Caco-2 (cell line): ENCODE measurements at regions of chr14 and their contacts with region 1.

Region 1: DNA sequence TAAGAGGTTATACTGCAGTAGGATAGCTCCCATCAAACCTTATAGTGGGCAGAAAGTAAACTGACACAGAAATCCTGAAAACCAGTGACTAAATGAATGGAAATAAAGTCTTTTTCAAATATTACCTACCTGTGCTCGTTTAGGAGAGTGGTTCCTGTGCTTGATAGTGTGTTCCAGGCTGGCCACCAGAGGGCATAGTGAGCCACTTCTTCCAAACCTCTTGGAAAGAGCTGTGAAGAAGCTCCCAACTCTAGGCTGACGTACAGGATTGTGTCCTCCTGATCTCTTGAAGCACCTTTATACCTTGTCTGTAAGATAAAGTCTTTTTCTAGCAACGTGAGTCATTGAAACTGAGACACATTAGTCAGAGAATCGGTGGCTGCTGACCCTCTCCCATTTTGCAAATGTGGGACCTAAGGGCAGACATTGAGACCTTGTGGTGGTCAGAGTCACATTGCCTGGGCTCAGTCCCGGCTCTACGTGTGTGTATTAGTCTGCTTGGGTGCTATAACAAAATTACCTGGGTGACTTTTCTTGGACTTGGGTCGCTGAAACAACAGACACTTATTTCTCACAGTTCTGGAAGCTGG is 17.6 kb downstream of the TDP1 start:
- DNase-seq: peak; percentile 62 to 69
- H3K4me3 ChIP-seq: no peak overlapping the region
- H3K4me3 Mint-ChIP-seq: no peak overlapping the region
- H3K27ac Mint-ChIP-seq: no peak overlapping the region
- H3K4me1 ChIP-seq: no peaks in the 10 kb centered on the region
- H3K4me1 Mint-ChIP-seq: no peaks in the 10 kb centered on the region
- H3K27me3 ChIP-seq: no peaks in the 10 kb centered on the region
- H3K27me3 Mint-ChIP-seq: no peaks in the 10 kb centered on the region
- CTCF ChIP-seq: peak; percentile 77 to 94

Region 2: DNA sequence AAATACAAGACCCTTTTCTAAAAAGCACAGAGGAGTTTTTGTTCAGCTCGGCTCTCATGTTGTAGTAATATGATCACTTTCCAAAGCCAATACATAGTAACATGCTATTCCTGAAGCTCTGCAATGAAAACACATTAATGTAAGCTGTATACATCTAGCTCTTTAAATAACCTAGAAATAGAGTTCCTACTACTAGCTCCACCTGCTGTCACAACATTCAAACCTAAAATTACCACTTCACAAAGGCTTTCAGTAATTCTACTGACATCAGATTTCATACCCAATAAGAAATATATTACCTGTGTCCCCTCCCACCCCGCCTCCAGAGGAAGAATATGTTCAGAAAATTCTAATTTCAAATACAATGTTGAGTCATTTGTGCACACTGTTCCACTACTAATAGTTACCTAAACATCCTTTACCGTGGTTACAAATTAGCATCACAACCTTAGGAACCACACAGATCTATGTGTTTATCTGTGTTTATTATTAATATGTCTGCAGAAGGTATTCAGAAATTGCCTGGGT is 36.6 kb before region 1 on chr14:
- CTCF ChIA-PET with region 1: interaction called, 11 read pairs
- POLR2A ChIA-PET with region 1: no interaction called
- intact Hi-C with region 1: no loop called
- DNase-seq: no peak
- H3K4me3 ChIP-seq: no peak overlapping the region
- H3K4me3 Mint-ChIP-seq: no peak overlapping the region
- H3K27ac Mint-ChIP-seq: no peak overlapping the region
- H3K4me1 ChIP-seq: no peaks in the 10 kb centered on the region
- H3K4me1 Mint-ChIP-seq: no peaks in the 10 kb centered on the region
- H3K27me3 ChIP-seq: no peaks in the 10 kb centered on the region
- H3K27me3 Mint-ChIP-seq: no peaks in the 10 kb centered on the region
- CTCF ChIP-seq: no peak

Region 3: GRCh38 chr14:89954070-89955028 is 19.0 kb before region 1 on chr14 and contains the start of gene EFCAB11:
- CTCF ChIA-PET with region 1: interaction called, 21 read pairs
- POLR2A ChIA-PET with region 1: interaction called, 3 read pairs
- intact Hi-C with region 1: no loop called
- DNase-seq: peak; percentile 97 to 98
- H3K4me3 ChIP-seq: peak within 1 kb of the TSS; percentile 92
- H3K4me3 Mint-ChIP-seq: peak within 1 kb of the TSS; percentile 93
- H3K27ac Mint-ChIP-seq: peak within 1 kb of the TSS; percentile 97
- H3K4me1 ChIP-seq: no peaks in the 10 kb centered on the region
- H3K4me1 Mint-ChIP-seq: peaks cover 15% of the 10 kb centered on the region
- H3K27me3 ChIP-seq: no peaks in the 10 kb centered on the region
- H3K27me3 Mint-ChIP-seq: no peaks in the 10 kb centered on the region
- CTCF ChIP-seq: peak in 1 of 2 experiments; percentile 25
- total RNA-seq, gene EFCAB11: 33.1 and 36.2 TPM in 2 replicates

Region 4: GRCh38 chr14:90060312-90060964 is 87.1 kb after region 1 on chr14:
- CTCF ChIA-PET with region 1: interaction called, 11 read pairs
- POLR2A ChIA-PET with region 1: no interaction called
- intact Hi-C with region 1: loop called (anchors 1 kb)
- DNase-seq: peak; percentile 52 to 66
- H3K4me3 ChIP-seq: peak overlapping the region; percentile 32
- H3K4me3 Mint-ChIP-seq: peak overlapping the region; percentile 85
- H3K27ac Mint-ChIP-seq: no peak overlapping the region
- H3K4me1 ChIP-seq: peaks cover 8% of the 10 kb centered on the region; the same call in 1 of the 2 replicates
- H3K4me1 Mint-ChIP-seq: peaks cover 10% of the 10 kb centered on the region
- H3K27me3 ChIP-seq: peaks cover 5% of the 10 kb centered on the region
- H3K27me3 Mint-ChIP-seq: peaks cover 32% of the 10 kb centered on the region
- CTCF ChIP-seq: peak; percentile 44 to 46

Region 5: DNA sequence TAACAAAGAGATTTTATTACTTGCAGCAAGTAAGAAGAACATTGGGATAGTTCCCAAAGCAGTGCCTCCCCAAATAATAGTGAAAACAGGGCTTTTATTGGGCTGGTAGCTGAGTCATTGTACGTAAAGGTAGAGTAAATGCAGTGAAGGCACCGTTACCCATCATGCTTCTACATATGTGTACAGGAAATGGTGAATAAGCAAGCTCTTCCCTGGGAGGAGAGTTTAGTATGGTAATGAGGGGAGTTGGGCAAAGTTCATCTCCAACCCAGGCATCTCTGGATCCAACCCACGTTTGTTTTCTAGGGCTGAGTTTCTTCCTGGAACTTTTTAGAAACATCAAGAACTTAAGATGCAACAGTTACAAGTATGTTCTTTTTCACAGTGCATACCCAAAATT is 144.7 kb after region 1 on chr14:
- CTCF ChIA-PET with region 1: no interaction called
- POLR2A ChIA-PET with region 1: no interaction called
- intact Hi-C with region 1: no loop called
- DNase-seq: no peak
- H3K4me3 ChIP-seq: no peak overlapping the region
- H3K4me3 Mint-ChIP-seq: no peak overlapping the region
- H3K27ac Mint-ChIP-seq: no peak overlapping the region
- H3K4me1 ChIP-seq: no peaks in the 10 kb centered on the region
- H3K4me1 Mint-ChIP-seq: no peaks in the 10 kb centered on the region
- H3K27me3 ChIP-seq: no peaks in the 10 kb centered on the region
- H3K27me3 Mint-ChIP-seq: peaks cover 2% of the 10 kb centered on the region
- CTCF ChIP-seq: no peak

Region 6: GRCh38 chr14:90184571-90185266 is 211.4 kb after region 1 on chr14:
- CTCF ChIA-PET with region 1: interaction called, 10 read pairs
- POLR2A ChIA-PET with region 1: no interaction called
- intact Hi-C with region 1: no loop called
- DNase-seq: peak in 1 of 2 experiments; percentile 20
- H3K4me3 ChIP-seq: no peak overlapping the region
- H3K4me3 Mint-ChIP-seq: no peak overlapping the region
- H3K27ac Mint-ChIP-seq: no peak overlapping the region
- H3K4me1 ChIP-seq: no peaks in the 10 kb centered on the region
- H3K4me1 Mint-ChIP-seq: no peaks in the 10 kb centered on the region
- H3K27me3 ChIP-seq: no peaks in the 10 kb centered on the region
- H3K27me3 Mint-ChIP-seq: peaks cover 18% of the 10 kb centered on the region
- CTCF ChIP-seq: no peak

Region 7: GRCh38 chr14:90235179-90235976 is 262.0 kb after region 1 on chr14:
- CTCF ChIA-PET with region 1: interaction called, 14 read pairs
- POLR2A ChIA-PET with region 1: interaction called, 3 read pairs
- intact Hi-C with region 1: loop called (anchors 1 kb)
- DNase-seq: peak; percentile 43 to 74
- H3K4me3 ChIP-seq: no peak overlapping the region
- H3K4me3 Mint-ChIP-seq: no peak overlapping the region
- H3K27ac Mint-ChIP-seq: no peak overlapping the region
- H3K4me1 ChIP-seq: no peaks in the 10 kb centered on the region
- H3K4me1 Mint-ChIP-seq: no peaks in the 10 kb centered on the region
- H3K27me3 ChIP-seq: no peaks in the 10 kb centered on the region
- H3K27me3 Mint-ChIP-seq: no peaks in the 10 kb centered on the region
- CTCF ChIP-seq: peak; percentile 79 to 95

Region 8: GRCh38 chr14:90368946-90369721 is 395.8 kb after region 1 on chr14:
- CTCF ChIA-PET with region 1: no interaction called
- POLR2A ChIA-PET with region 1: no interaction called
- intact Hi-C with region 1: no loop called
- DNase-seq: peak; percentile 39 to 62
- H3K4me3 ChIP-seq: no peak overlapping the region
- H3K4me3 Mint-ChIP-seq: no peak overlapping the region
- H3K27ac Mint-ChIP-seq: no peak overlapping the region
- H3K4me1 ChIP-seq: peaks cover 23% of the 10 kb centered on the region
- H3K4me1 Mint-ChIP-seq: peaks cover 13% of the 10 kb centered on the region
- H3K27me3 ChIP-seq: no peaks in the 10 kb centered on the region
- H3K27me3 Mint-ChIP-seq: no peaks in the 10 kb centered on the region
- CTCF ChIP-seq: no peak